ENCODE measurements at regions of chr19 and their contacts with region 1.

Region 1: GRCh38 chr19:55549500-55550320 is 4.4 kb upstream of the SBK3 start:
- DNase-seq: peak; percentile 56
- H3K4me3 Mint-ChIP-seq: peak overlapping the region; percentile 65
- H3K27ac Mint-ChIP-seq: peak overlapping the region; percentile 94
- H3K4me1 Mint-ChIP-seq: peaks cover 69% of the 10 kb centered on the region
- H3K27me3 Mint-ChIP-seq: peaks cover 13% of the 10 kb centered on the region
- CTCF ChIP-seq: no peak

Region 2: DNA sequence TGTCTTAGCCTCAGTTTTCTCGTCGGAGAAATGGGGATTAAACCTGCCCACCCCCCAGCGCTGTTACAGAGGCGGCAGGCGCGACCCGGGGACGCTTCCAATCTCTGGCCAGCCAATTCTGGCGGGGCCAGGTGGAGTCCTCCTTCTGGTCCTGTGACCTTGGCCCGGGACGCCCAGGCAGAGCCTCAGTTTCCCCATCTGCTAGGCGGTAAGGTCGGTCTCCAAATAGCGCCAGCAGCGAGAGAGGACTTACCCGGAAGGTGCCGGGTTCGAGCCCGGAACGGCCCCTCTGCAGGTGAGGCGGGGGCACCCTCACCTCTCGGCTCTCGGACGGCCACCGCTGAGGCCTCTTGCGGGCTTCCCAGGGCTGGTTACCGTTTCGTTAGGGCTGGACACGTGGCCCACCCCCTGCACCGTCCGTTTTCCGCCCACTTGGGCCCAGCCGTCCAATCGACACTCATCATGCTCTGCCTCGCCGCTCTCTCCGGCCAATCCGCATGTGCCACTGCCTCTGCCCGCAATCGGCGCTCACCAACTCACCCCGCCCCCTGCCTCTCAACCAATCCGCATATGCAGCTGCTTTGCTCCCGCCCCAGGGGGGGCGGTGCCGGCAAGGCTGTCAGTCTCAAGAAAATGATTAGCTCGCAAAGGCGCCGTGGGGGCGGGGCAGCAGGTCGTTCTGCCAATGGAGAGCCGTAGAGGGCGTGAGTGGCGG is 88.3 kb before region 1 on chr19 and contains the start of gene ISOC2:
- CTCF ChIA-PET with region 1: no interaction called
- intact Hi-C with region 1: no loop called
- DNase-seq: peak; percentile 100
- H3K4me3 Mint-ChIP-seq: peak within 1 kb of the TSS; percentile 84
- H3K27ac Mint-ChIP-seq: peak within 1 kb of the TSS; percentile 90
- H3K4me1 Mint-ChIP-seq: peaks cover 29% of the 10 kb centered on the region
- H3K27me3 Mint-ChIP-seq: peaks cover 54% of the 10 kb centered on the region
- CTCF ChIP-seq: no peak
- total RNA-seq, gene ISOC2: 41.6 and 44.9 TPM in 2 replicates

Region 3: GRCh38 chr19:55580628-55581144 is 31.0 kb after region 1 on chr19 and contains the start of gene ZNF579:
- CTCF ChIA-PET with region 1: interaction called, 11 read pairs
- intact Hi-C with region 1: loop called (anchors 5 kb)
- DNase-seq: peak; percentile 95
- H3K4me3 Mint-ChIP-seq: peak within 1 kb of the TSS; percentile 80
- H3K27ac Mint-ChIP-seq: peak within 1 kb of the TSS; percentile 52
- H3K4me1 Mint-ChIP-seq: peaks cover 29% of the 10 kb centered on the region
- H3K27me3 Mint-ChIP-seq: peaks cover 11% of the 10 kb centered on the region
- CTCF ChIP-seq: no peak
- total RNA-seq, gene ZNF579: 29.8 and 33.4 TPM in 2 replicates

Region 4: GRCh38 chr19:55599468-55600279 is 50.0 kb after region 1 on chr19 and contains the start of gene FIZ1:
- CTCF ChIA-PET with region 1: interaction called, 3 read pairs
- intact Hi-C with region 1: loop called (anchors 5 kb)
- DNase-seq: peak; percentile 99
- H3K4me3 Mint-ChIP-seq: peak within 1 kb of the TSS; percentile 87
- H3K27ac Mint-ChIP-seq: peak within 1 kb of the TSS; percentile 94
- H3K4me1 Mint-ChIP-seq: peaks cover 21% of the 10 kb centered on the region
- H3K27me3 Mint-ChIP-seq: no peaks in the 10 kb centered on the region
- CTCF ChIP-seq: no peak
- total RNA-seq, gene FIZ1: 18.6 and 23.0 TPM in 2 replicates

Region 5: DNA sequence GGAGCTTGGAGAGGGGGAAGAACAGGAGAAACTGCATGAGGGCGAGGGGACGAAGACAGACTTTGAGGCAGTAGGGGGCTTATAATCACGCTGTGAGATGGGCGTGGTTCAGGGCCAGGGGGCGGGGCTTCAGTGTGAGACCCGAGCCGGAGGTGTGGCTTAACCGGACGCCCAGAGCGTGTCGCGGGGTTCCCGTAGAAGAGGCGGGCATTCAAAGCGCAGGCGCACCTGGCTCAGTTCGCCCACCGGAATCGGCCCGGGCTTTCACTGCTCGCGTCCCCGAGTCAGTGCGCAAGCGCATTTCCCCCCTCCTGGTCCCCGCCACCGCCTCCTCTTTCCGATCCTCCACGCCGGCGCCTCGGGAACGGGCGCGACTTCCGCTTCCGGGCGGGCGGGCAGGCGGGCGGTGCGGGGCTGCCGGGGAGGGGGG is 55.5 kb after region 1 on chr19:
- CTCF ChIA-PET with region 1: interaction called, 4 read pairs
- intact Hi-C with region 1: loop called (anchors 2 kb)
- DNase-seq: peak; percentile 99
- H3K4me3 Mint-ChIP-seq: peak overlapping the region; percentile 86
- H3K27ac Mint-ChIP-seq: peak overlapping the region; percentile 70
- H3K4me1 Mint-ChIP-seq: peaks cover 34% of the 10 kb centered on the region
- H3K27me3 Mint-ChIP-seq: no peaks in the 10 kb centered on the region
- CTCF ChIP-seq: no peak